Mammary epithelial cell (primary cell): ENCODE measurements at regions of chr9 and their contacts with region 1.

Region 1: DNA sequence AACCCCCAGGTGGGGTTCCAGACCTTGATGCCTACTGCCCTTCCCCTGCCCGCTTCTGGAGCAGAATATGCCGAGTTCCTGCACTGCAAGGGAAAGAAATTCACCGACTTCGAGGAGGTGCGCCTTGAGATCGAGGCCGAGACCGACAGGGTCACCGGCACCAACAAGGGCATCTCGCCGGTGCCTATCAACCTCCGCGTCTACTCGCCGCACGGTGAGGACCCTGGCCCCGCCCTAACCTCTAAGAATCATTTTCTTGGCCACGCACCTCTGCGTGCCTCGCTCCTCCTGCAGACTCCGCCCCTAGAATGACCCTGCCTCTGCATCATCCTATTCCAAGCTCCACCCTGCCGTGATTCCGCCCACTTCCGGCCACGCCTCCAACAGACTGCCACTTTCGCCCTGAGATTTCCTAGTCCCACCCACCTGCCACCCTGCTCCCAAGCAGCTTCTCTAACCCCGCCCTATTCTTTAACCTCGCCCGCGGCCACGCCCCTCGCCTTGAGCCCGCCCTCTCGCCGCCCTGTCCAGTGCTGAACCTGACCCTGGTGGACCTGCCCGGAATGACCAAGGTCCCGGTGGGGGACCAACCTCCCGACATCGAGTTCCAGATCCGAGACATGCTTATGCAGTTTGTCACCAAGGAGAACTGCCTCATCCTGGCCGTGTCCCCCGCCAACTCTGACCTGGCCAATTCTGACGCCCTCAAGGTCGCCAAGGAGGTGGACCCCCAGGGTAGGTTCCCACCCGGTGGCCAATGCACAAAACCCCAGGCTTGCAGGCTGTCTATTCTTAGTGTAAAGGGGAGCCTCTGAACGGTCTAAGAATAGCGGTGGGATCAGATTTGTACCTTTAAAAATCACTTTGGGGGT is 15.6 kb downstream of the DNM1 start:
- DNase-seq: peak; percentile 93
- H3K4me3 ChIP-seq: peak overlapping the region in 1 of 3 experiments; percentile 18
- H3K27ac ChIP-seq: no peak overlapping the region
- H3K4me1 ChIP-seq: peaks cover 15% of the 10 kb centered on the region
- H3K27me3 ChIP-seq: no peaks in the 10 kb centered on the region
- CTCF ChIP-seq: no peak

Region 2: DNA sequence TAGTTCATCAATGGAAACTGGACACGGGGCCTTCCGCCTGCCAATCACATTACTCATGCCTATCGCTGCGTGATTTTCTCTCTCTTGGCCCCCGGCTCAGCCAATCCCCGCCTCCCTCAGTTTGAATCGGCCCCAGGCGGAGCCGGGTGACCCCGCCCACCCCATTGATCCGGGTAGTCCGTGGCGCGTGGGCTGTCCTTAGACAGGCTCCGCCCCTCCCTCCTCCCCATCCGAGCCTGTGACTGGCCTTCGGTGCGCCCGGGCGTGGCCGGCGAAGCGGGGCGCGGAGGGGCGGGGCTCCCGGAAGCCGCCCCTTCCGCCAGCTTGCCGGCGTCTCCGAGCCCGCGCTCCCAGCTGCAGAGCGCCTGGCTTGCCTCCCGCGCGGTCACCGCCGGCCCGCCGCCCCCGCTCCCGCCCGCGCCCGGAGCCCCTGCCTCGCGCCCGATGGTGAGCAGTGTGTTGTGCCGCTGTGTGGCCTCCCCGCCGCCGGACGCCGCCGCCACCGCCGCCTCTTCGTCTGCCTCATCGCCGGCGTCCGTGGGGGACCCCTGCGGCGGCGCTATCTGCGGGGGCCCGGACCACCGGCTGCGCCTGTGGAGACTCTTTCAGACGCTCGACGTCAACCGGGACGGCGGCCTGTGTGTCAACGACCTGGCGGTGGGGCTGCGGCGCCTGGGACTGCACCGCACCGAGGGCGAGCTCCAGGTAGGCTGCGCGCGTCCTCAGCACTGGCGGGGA is 150.7 kb before region 1 on chr9 and contains the start of gene SLC25A25:
- CTCF ChIA-PET with region 1: no interaction called
- dilution Hi-C with region 1: no loop called
- in situ Hi-C with region 1: no loop called
- intact Hi-C with region 1: no loop called
- DNase-seq: peak; percentile 98
- H3K4me3 ChIP-seq: peak within 1 kb of the TSS; percentile 74 to 83 (median 82)
- H3K27ac ChIP-seq: peak within 1 kb of the TSS; percentile 99
- H3K4me1 ChIP-seq: peaks cover 21% of the 10 kb centered on the region
- H3K27me3 ChIP-seq: no peaks in the 10 kb centered on the region
- CTCF ChIP-seq: no peak
- total RNA-seq, gene SLC25A25: 10.8 to 12.8 TPM

Region 3: DNA sequence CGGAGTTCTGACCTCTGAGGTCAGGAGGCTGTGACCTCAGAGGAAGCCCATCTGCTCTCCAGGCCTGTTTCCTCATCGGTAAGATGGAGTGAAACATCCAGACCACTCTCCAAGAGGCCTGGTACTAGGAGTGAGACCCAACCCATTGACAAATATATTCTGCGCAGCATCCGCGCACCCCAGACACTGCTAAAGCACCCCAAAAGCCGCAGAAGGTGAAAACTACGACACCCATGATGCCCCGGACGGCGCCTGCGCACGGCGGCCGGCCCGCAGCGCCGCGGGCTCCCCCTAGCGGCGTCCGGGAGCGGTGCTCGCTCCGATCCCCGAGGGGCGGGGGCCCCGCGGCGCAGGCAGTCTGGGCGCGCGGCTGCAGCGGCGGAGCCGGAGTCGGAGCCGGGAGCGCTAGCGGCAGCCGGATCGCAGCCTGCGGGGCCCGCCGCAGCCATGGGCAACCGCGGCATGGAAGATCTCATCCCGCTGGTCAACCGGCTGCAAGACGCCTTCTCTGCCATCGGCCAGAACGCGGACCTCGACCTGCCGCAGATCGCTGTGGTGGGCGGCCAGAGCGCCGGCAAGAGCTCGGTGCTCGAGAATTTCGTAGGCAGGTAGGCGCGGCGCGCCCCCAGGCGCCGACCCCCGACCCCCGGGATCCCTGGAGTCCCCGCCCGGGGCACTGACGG is 15.6 kb before region 1 on chr9 and contains the start of gene DNM1:
- CTCF ChIA-PET with region 1: no interaction called
- dilution Hi-C with region 1: no loop called
- in situ Hi-C with region 1: no loop called
- intact Hi-C with region 1: loop called (anchors 1 kb)
- DNase-seq: peak; percentile 38
- H3K4me3 ChIP-seq: peak within 1 kb of the TSS; percentile 26 to 55 (median 44)
- H3K27ac ChIP-seq: no peak within 1 kb of the TSS
- H3K4me1 ChIP-seq: peaks cover 10% of the 10 kb centered on the region
- H3K27me3 ChIP-seq: peaks cover 9% of the 10 kb centered on the region
- CTCF ChIP-seq: peak; percentile 62 to 64
- total RNA-seq, gene DNM1: 0.67 to 3.2 TPM

Region 4: DNA sequence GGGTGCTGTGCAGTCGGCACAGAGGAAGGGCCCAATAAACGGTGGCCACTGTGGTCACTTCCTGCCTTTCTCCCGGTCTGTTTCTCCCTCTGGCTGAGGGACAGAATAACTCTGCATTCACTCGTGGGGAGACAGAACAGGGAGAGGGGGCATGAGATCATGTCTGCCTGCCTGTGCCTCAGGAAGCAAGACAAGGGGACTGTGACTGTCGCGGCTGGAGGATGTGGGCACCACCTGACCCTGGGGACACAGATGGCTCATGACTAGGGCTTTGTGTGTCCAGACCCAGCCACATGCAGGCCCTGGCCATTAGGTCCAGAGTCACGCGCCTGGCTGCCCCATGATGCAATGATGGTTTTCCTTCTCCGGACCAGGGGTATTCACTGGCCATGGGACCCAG is 97.7 kb after region 1 on chr9:
- CTCF ChIA-PET with region 1: no interaction called
- dilution Hi-C with region 1: loop called (anchors 5 kb)
- in situ Hi-C with region 1: no loop called
- intact Hi-C with region 1: no loop called
- DNase-seq: no peak
- H3K4me3 ChIP-seq: no peak overlapping the region
- H3K27ac ChIP-seq: no peak overlapping the region
- H3K4me1 ChIP-seq: peaks cover 4% of the 10 kb centered on the region
- H3K27me3 ChIP-seq: no peaks in the 10 kb centered on the region
- CTCF ChIP-seq: no peak